Activated B cell treated with CpG ODN at 0.5 μM for 24 hours (primary cell): ENCODE measurements at regions of chr14 and their contacts with region 1.

Region 1: DNA sequence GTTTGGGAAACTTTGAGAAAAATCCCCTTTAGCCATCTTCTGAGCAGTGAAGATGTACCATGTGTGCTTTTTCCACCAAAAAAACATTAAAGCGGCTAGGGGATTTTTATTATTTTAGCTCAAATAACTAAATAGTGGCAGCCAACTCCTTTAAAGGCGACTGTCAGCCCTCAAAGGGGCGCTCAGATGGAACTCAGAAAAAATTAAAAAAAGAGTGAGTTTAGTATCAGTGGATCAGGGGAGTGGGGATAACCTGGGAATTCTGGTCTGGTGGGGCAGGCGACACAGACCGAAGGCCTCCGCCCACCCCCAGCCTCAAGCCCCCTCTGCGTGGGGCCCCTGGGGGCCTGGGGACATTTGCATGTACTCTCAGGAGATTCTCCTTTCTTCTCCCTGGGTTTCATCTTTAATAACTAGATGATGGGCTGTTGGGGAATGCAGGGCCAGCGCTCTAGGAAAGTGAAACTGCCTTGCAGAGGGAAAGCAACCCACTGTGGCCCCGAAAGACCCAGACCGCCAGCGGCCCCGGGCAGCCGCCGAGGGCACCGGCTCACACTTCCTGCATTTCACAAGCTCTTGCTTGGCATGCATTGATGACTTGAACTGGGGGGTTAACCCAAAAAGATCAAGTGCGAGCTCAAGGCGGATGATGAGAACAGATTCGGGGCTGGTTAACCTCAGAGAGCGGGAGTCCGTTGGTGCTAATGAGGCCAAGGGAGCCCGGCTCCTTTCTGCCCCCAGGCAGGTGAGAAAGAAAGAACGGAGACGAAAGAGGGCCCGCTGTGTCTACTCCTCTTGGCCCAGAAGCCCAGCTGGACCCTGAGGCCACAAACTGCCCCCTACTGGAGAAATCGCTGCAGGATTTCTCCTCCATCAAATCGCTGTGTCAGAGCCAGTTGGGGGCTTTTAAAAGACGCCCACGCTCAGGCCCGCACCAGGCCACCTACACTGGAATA is 7.3 kb upstream of the BATF start:
- DNase-seq: peak; percentile 61
- ATAC-seq: peak; percentile 56
- H3K4me3 Mint-ChIP-seq: peak overlapping the region; percentile 87
- H3K27ac Mint-ChIP-seq: peak overlapping the region; percentile 99
- H3K4me1 Mint-ChIP-seq: peaks cover 69% of the 10 kb centered on the region
- H3K27me3 Mint-ChIP-seq: no peaks in the 10 kb centered on the region
- CTCF ChIP-seq: no peak

Region 2: GRCh38 chr14:75333606-75334548 is 181.1 kb before region 1 on chr14:
- CTCF ChIA-PET with region 1: no interaction called
- POLR2A ChIA-PET with region 1: interaction called, 15 read pairs
- intact Hi-C with region 1: no loop called
- DNase-seq: peak; percentile 32
- ATAC-seq: peak; percentile 80
- H3K4me3 Mint-ChIP-seq: peak overlapping the region; percentile 84
- H3K27ac Mint-ChIP-seq: peak overlapping the region; percentile 81
- H3K4me1 Mint-ChIP-seq: peaks cover 27% of the 10 kb centered on the region
- H3K27me3 Mint-ChIP-seq: peaks cover 4% of the 10 kb centered on the region
- CTCF ChIP-seq: no peak

Region 3: DNA sequence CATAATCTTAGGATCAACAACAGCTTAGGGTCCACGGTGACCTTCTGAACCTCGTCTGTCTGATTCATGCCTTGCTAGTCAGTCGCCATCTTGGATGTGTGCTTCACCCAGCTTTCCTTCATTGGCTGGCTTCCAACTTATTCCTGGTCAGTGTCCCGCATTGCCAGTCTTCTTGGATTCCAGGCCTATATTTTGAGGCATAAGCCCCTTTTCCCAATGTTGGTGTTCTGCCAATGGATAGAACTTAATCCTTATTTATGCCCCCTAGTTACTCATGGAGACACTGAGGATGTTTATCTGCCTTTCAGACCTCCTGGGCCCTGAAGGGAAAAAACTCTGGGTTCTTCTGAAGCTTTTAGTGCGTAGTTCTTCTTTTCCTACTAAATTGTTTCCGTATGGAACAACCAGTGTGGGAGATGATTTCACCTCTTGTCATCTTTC is 81.3 kb before region 1 on chr14:
- CTCF ChIA-PET with region 1: interaction called, 4 read pairs
- POLR2A ChIA-PET with region 1: interaction called, 10 read pairs
- intact Hi-C with region 1: no loop called
- DNase-seq: no peak
- ATAC-seq: no peak
- H3K4me3 Mint-ChIP-seq: no peak overlapping the region
- H3K27ac Mint-ChIP-seq: no peak overlapping the region
- H3K4me1 Mint-ChIP-seq: peaks cover 47% of the 10 kb centered on the region
- H3K27me3 Mint-ChIP-seq: no peaks in the 10 kb centered on the region
- CTCF ChIP-seq: no peak

Region 4: DNA sequence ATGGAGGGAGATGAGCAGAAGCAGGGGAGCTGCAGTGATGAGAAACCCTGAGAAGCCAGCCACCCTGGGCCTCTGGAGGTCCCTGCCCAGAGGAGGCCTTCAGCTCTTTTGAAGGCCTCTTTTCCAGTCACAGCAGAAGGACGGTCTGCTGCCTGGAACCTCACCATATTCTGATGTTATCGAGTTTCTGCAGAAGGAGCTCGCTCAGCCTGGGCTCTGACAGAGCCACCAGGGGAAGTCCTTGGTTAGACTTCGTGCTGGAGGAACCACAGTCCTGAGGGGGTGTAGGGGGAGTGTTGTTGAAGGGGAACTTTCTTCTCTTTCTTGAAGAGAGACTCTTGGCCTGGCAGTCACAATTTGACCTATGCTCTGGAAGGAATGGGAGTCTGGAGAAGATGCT is 17.8 kb before region 1 on chr14:
- CTCF ChIA-PET with region 1: interaction called, 22 read pairs
- POLR2A ChIA-PET with region 1: interaction called, 132 read pairs
- intact Hi-C with region 1: loop called (anchors 1 kb)
- DNase-seq: no peak
- ATAC-seq: peak; percentile 71
- H3K4me3 Mint-ChIP-seq: peak overlapping the region; percentile 46
- H3K27ac Mint-ChIP-seq: peak overlapping the region; percentile 77
- H3K4me1 Mint-ChIP-seq: peaks cover 65% of the 10 kb centered on the region
- H3K27me3 Mint-ChIP-seq: no peaks in the 10 kb centered on the region
- CTCF ChIP-seq: no peak

Region 5: DNA sequence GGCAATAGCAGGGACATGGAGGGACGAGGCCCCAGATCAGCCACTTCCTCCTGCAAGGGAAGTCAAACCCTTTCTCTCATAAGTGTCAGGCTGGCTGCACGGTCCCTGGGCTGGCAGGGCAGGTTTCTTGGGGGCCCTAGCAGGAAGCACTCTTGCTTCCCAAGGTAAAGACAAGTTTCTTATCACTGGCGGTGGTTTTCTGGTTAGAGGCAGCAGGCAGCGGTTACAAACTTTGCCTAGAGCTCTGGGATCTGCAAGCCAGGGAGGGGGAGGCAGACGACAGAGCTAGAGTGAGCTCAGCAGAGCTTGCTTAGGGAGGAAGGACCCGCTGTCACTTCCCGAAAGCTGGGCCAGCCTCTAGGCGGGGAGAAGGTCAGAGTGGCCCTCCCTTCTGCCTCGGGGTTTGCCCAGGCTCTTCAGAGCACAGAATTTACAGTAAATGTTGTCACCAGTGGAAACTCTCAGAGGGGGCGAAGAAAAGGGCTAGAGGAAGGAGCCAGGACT is 27.7 kb after region 1 on chr14:
- CTCF ChIA-PET with region 1: interaction called, 10 read pairs
- POLR2A ChIA-PET with region 1: interaction called, 356 read pairs
- intact Hi-C with region 1: loop called (anchors 1 kb)
- DNase-seq: peak; percentile 65
- ATAC-seq: peak; percentile 80
- H3K4me3 Mint-ChIP-seq: peak overlapping the region; percentile 74
- H3K27ac Mint-ChIP-seq: peak overlapping the region; percentile 99
- H3K4me1 Mint-ChIP-seq: peaks cover 78% of the 10 kb centered on the region
- H3K27me3 Mint-ChIP-seq: no peaks in the 10 kb centered on the region
- CTCF ChIP-seq: no peak

Region 6: GRCh38 chr14:75560962-75561432 is 46.0 kb after region 1 on chr14:
- CTCF ChIA-PET with region 1: interaction called, 19 read pairs
- POLR2A ChIA-PET with region 1: interaction called, 16 read pairs
- intact Hi-C with region 1: loop called (anchors 1 kb)
- DNase-seq: no peak
- ATAC-seq: peak; percentile 46
- H3K4me3 Mint-ChIP-seq: peak overlapping the region; percentile 42
- H3K27ac Mint-ChIP-seq: peak overlapping the region; percentile 41
- H3K4me1 Mint-ChIP-seq: peaks cover 37% of the 10 kb centered on the region
- H3K27me3 Mint-ChIP-seq: no peaks in the 10 kb centered on the region
- CTCF ChIP-seq: peak; percentile 40